HEK293 (cell line): ENCODE measurements at regions of chr14 and their contacts with region 1.

Region 1: GRCh38 chr14:68816262-68816942 is 23.5 kb upstream of the ZFP36L1 start:
- H3K4me3 ChIP-seq: peak overlapping the region; percentile 49
- H3K27ac ChIP-seq: peak overlapping the region; percentile 98
- H3K4me1 ChIP-seq: peaks cover 22% of the 10 kb centered on the region
- CTCF ChIP-seq: peak; percentile 95

Region 2: DNA sequence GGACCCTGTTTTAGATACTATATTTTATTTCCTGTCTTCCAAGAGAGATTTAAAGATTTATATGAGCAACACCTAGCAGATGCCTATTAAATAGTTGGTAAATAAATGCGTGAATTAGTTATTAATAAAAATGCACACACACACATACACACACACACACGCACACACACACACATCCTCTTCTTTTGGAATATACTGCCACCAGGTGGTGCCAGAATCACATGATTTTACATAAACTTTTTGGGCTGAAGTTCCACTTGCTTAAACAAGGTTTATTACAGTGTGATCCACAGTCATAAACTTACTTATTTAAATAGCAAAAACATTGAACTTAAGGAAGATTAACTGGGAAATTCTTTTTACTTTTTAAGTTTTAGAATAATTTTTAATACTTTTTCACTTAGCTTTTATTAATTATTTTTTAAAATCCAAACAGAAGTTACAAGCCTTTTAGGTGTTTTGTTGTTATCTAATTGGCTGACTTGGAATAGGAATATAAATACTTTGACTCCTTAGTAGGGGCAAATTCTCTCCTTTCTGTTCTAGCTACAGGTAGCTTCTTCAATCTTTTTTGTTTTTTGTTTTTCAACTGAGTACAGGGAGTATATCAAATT is 979.3 kb before region 1 on chr14:
- CTCF ChIA-PET with region 1: interaction called, 12 read pairs
- POLR2A ChIA-PET with region 1: no interaction called
- H3K4me3 ChIP-seq: no peak overlapping the region
- H3K27ac ChIP-seq: no peak overlapping the region
- H3K4me1 ChIP-seq: no peaks in the 10 kb centered on the region
- CTCF ChIP-seq: peak; percentile 42

Region 3: GRCh38 chr14:67943947-67944346 is 872.5 kb before region 1 on chr14:
- CTCF ChIA-PET with region 1: interaction called, 46 read pairs
- POLR2A ChIA-PET with region 1: no interaction called
- H3K4me3 ChIP-seq: no peak overlapping the region
- H3K27ac ChIP-seq: no peak overlapping the region
- H3K4me1 ChIP-seq: peaks cover 34% of the 10 kb centered on the region
- CTCF ChIP-seq: peak; percentile 58; the same call in 1 of the 2 replicates

Region 4: DNA sequence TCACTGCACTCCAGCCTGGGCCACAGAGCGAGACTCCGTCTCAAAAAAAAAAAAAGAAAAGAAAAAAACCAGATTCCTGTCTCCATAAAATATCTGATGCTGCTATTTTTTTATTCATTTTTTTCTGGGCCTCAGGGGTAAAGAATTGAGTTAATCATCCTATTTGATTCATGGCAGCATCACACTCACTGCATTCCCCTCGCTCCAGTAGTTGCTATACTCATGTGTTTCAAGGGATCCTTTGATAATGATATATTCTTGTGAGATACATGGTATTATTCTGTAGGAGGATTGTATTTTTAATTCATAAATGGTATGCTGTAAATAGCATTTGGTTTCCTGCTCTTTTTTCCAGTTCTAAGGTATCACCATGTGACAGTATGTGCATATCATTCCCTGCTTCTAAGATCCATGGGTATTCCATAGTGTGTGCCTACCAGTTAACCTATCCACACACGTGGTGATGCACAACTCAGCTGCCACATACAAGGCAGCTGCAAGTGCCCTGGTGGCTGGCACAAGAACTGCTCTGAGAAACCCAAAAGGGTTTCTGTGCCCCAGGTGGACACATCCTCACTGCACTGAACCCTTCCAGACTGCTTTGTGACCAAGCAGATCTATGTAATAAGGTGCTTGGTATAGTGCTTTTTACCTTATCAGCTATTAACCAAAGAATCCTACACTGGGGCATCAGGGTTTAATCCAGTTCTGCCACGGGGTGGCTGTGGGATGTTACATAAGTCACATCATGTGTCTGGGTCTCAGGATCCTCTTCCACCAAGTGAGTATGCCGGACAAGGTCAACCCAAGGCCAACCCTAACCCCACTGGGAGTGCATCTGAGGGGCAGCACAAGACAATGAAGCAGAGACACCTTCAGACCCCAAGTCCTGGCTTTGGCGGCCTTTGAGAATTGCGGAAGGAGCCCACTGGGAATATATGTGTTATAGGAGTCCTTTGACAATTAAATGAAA is 98.1 kb before region 1 on chr14:
- CTCF ChIA-PET with region 1: interaction called, 10 read pairs
- POLR2A ChIA-PET with region 1: no interaction called
- H3K4me3 ChIP-seq: no peak overlapping the region
- H3K27ac ChIP-seq: no peak overlapping the region
- H3K4me1 ChIP-seq: no peaks in the 10 kb centered on the region
- CTCF ChIP-seq: no peak

Region 5: GRCh38 chr14:68843471-68844209 is 27.2 kb after region 1 on chr14:
- CTCF ChIA-PET with region 1: interaction called, 19 read pairs
- POLR2A ChIA-PET with region 1: no interaction called
- H3K4me3 ChIP-seq: peak overlapping the region; percentile 6; the same call in 1 of the 2 replicates
- H3K27ac ChIP-seq: no peak overlapping the region; the same call in 1 of the 2 replicates
- H3K4me1 ChIP-seq: 0 out of 2 replicates have a peak, but pooled peaks cover 3% of the 10 kb centered on the region
- CTCF ChIP-seq: peak; percentile 74